Posterior vena cava (tissue), 2 donors: ENCODE measurements at regions of chr11 and their contacts with region 1.

Region 1: GRCh38 chr11:76277298-76278175 is 71.2 kb upstream of the WNT11 start:
- DNase-seq: no peak

Region 2: DNA sequence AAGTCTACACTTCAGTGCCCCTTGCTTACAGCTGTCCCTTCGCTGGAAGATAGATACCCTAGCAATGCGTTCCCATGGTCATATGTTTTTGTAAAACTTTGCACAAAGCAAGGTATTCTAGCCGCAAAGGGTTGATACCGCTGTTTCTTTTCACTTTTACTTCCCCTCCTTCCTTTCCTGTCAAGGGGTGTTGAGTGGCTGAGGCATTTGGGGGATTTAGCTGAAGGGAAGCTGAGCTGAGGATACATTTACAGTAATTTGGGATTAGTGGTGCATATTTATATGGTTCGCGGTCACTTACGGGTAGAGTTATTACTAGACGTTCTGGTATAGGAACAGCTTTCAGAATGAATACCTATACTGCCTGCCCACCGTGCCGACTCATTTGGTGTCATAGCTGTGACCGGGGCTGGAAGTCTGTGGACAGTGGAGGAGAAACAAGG is 15.7 kb after region 1 on chr11:
- intact Hi-C with region 1: no loop called
- DNase-seq: no peak

Region 3: DNA sequence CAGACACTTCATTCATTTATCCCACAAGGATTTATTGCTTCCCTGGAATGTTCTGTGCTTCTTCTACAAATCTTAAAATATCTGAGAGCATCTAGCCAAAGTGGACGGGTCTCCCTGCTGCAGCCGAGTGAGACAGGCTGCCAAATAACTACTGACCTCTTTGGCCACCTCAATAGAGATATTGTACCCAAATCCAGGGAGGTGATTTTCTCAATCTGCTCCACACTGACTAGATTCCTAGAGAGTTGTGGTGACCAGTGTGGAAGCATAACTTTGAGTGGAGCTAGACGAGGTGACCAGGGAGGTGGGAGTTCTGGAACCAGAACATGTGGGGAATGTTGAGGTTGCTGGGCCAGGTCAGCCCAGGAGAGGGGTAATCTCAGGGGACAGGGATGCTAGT is 25.9 kb after region 1 on chr11:
- intact Hi-C with region 1: no loop called
- DNase-seq: no peak

Region 4: DNA sequence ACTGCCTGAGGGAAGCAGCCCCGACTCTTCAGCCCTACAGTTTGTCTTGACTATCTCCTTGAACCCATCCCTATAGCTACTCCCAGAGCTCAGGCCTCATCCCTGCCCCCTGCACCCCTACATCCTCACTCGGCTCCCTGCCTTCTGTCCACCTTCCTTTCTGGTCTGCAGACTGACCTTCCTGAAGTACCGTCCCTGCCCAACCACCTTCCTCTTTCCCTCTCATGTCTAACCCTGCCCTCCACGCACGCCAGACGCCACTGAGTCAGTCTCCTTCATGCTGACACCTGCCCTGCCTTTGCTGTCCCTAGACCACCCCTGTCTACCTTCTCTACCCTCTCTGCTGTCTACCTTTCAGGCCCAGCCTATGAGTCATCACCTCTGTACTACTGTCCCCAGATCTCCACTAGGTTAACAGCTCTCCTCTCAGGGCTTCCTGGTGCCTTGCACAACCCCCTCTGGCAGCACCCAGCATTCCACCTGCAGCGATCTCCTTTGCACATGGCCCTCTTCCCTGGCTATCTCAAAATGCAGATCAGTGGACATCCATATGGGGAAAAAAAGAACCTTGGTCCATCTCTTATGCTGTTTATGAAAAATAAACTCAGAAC is 1902.0 kb after region 1 on chr11:
- intact Hi-C with region 1: loop called in 1 of 2 experiments (anchors 5 kb)
- DNase-seq: no peak